Activated CD8-positive, alpha-beta T cell treated with anti-CD3 and anti-CD28 coated beads for 36 hours (primary cell): ENCODE measurements at regions of chr7 and their contacts with region 1.

Region 1: DNA sequence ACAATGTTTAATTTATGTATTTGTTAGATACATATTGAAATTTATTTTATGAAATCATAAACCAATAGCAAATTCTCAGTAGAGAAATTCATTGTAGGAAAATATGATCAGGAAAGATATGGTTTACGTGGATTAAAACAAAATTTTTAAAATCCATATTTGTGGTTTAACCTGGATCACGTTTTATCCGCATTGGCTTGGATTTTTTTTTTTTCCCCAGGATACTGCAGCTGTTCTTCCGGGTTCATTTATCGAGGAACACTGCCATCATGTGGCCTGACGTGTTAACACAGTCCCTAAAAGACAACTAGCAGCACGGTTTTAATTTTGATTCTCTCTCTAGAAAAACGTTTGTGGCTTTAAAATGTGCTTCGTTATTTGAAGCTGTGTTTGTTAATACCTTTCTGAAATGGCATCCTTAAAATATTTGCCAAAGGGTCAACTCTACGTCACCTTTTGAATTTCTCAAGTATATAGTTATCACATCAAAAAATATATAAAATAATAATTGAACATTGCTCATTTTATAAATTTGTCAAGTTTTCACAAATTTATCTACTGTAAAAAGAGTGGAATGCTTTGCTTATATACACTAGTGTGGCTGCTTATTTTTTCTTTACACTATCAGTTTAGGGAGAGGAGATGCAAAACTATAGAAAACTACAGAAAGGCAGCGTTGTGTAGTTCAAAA is 8.7 kb upstream of the ASB4 start:
- DNase-seq: peak; percentile 76
- ATAC-seq: peak; percentile 64
- H3K4me3 Mint-ChIP-seq: no peak overlapping the region
- H3K27ac Mint-ChIP-seq: no peak overlapping the region
- H3K4me1 Mint-ChIP-seq: no peaks in the 10 kb centered on the region
- H3K27me3 Mint-ChIP-seq: peaks cover 6% of the 10 kb centered on the region
- CTCF ChIP-seq: peak; percentile 94

Region 2: GRCh38 chr7:94449148-94449725 is 1027.8 kb before region 1 on chr7:
- CTCF ChIA-PET with region 1: interaction called, 34 read pairs
- POLR2A ChIA-PET with region 1: no interaction called
- intact Hi-C with region 1: loop called (anchors 10 kb)
- DNase-seq: no peak
- ATAC-seq: no peak
- H3K4me3 Mint-ChIP-seq: no peak overlapping the region
- H3K27ac Mint-ChIP-seq: no peak overlapping the region
- H3K4me1 Mint-ChIP-seq: no peaks in the 10 kb centered on the region
- H3K27me3 Mint-ChIP-seq: peaks cover 3% of the 10 kb centered on the region
- CTCF ChIP-seq: peak; percentile 51

Region 3: GRCh38 chr7:95190515-95190914 is 286.5 kb before region 1 on chr7:
- CTCF ChIA-PET with region 1: interaction called, 16 read pairs
- POLR2A ChIA-PET with region 1: no interaction called
- intact Hi-C with region 1: no loop called
- DNase-seq: peak; percentile 13
- ATAC-seq: no peak
- H3K4me3 Mint-ChIP-seq: no peak overlapping the region
- H3K27ac Mint-ChIP-seq: no peak overlapping the region
- H3K4me1 Mint-ChIP-seq: no peaks in the 10 kb centered on the region
- H3K27me3 Mint-ChIP-seq: no peaks in the 10 kb centered on the region
- CTCF ChIP-seq: no peak

Region 4: DNA sequence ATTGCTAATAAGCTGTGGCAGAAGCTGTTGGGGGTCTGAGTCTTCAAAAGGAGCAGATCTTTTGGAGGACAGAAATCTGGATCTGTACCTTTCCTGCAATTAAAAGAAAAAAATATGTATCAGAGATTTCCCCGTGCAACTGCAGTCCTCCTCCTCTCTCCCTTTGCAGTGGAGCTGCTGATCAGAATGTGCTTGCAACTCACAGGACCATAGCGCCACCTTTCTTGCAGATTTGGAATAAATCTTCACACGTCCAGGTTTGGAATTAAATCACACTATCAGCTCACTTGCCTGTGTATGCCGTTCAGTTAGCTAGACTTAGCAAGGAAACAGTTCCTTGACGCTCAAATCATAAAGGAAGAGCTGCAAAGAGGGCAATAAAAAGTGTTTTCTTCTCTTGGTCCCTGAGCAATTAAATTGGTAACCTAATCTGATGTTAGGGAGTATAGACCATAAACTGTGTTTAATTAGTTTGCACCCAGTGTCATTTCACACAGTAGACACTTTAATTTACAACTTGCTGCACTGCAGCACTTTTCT is 230.1 kb before region 1 on chr7:
- CTCF ChIA-PET with region 1: interaction called, 10 read pairs
- POLR2A ChIA-PET with region 1: no interaction called
- intact Hi-C with region 1: no loop called
- DNase-seq: peak; percentile 30
- ATAC-seq: no peak
- H3K4me3 Mint-ChIP-seq: no peak overlapping the region
- H3K27ac Mint-ChIP-seq: no peak overlapping the region
- H3K4me1 Mint-ChIP-seq: no peaks in the 10 kb centered on the region
- H3K27me3 Mint-ChIP-seq: peaks cover 5% of the 10 kb centered on the region
- CTCF ChIP-seq: peak; percentile 65

Region 5: GRCh38 chr7:95396136-95397032 is 80.7 kb before region 1 on chr7 and contains the start of gene PON3:
- CTCF ChIA-PET with region 1: interaction called, 36 read pairs
- POLR2A ChIA-PET with region 1: no interaction called
- intact Hi-C with region 1: no loop called
- DNase-seq: peak; percentile 42
- ATAC-seq: peak; percentile 92
- H3K4me3 Mint-ChIP-seq: peak within 1 kb of the TSS; percentile 62
- H3K27ac Mint-ChIP-seq: no peak within 1 kb of the TSS
- H3K4me1 Mint-ChIP-seq: peaks cover 3% of the 10 kb centered on the region
- H3K27me3 Mint-ChIP-seq: peaks cover 35% of the 10 kb centered on the region
- CTCF ChIP-seq: peak; percentile 34
- total RNA-seq, gene PON3: not detected

Region 6: GRCh38 chr7:95491634-95492320 is 14.7 kb after region 1 on chr7:
- CTCF ChIA-PET with region 1: interaction called, 28 read pairs
- POLR2A ChIA-PET with region 1: no interaction called
- intact Hi-C with region 1: no loop called
- DNase-seq: no peak
- ATAC-seq: no peak
- H3K4me3 Mint-ChIP-seq: no peak overlapping the region
- H3K27ac Mint-ChIP-seq: no peak overlapping the region
- H3K4me1 Mint-ChIP-seq: no peaks in the 10 kb centered on the region
- H3K27me3 Mint-ChIP-seq: no peaks in the 10 kb centered on the region
- CTCF ChIP-seq: no peak

Region 7: DNA sequence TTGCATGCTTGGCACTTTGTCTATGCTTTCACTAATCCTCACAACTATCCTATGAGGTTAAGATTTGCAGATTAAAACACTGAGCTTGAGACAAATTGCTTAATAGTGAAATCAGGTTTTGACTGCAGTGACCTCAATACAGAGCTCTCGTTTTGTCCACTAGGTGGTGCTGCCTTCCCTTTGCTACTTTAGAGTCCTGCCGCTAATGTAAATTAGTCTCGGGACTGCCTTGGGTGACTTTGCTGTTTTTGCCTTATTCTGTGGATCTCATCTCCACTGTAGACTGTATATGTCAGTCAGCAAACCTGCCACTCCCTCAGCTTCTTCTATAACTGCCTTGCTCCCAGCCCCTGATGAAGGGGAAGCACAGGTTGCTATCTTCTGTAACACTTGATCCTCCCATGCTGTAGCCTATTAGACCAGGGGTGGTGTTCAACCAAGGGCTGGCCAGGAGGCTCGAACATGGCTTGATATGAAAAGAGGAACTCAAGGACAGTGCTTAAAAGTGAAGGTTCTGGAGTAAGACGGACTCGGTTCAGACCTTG is 34.7 kb after region 1 on chr7:
- CTCF ChIA-PET with region 1: interaction called, 18 read pairs
- POLR2A ChIA-PET with region 1: no interaction called
- intact Hi-C with region 1: no loop called
- DNase-seq: peak; percentile 81
- ATAC-seq: peak; percentile 90
- H3K4me3 Mint-ChIP-seq: no peak overlapping the region
- H3K27ac Mint-ChIP-seq: no peak overlapping the region
- H3K4me1 Mint-ChIP-seq: no peaks in the 10 kb centered on the region
- H3K27me3 Mint-ChIP-seq: peaks cover 9% of the 10 kb centered on the region
- CTCF ChIP-seq: peak; percentile 80

Region 8: DNA sequence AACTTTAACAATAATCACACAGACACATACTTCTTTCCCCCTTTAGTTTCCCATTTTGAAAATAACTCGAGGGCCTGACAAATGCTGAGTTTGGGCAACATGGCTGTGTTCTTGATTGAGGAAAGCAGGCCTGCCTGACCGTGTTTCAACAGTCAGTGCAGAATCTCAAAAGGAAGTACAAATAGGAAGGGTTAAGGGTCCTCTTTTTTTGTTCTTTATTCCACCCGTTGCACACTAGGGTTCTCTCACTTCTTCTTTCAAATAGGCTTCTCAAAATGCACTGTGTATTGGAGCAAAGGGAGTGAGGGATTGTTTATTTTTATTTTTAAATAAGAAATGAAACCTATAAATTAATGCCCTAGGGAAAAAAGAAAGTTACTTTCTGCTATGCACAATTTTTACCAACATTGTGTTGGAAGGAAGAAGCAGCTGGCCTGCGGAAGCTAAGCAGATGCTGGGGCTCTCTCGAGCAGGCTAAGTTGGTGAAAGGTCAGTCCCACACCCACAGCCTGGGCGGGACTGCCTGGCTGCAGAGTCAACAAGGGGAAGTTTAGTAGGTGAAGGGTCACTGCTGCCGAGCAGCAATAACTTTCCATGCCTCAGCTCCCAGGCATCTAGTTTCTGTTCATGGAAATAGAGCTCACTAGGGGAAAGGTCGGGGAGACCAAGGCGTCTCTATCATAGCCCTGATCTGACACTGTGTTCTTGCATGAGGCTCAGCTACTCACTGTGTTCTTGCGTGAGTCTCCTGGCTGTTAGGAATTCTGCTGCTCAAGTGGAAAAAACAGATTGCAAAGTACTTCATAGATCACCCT is 131.5 kb after region 1 on chr7:
- CTCF ChIA-PET with region 1: no interaction called
- POLR2A ChIA-PET with region 1: no interaction called
- intact Hi-C with region 1: no loop called
- DNase-seq: peak; percentile 8
- ATAC-seq: no peak
- H3K4me3 Mint-ChIP-seq: no peak overlapping the region
- H3K27ac Mint-ChIP-seq: no peak overlapping the region
- H3K4me1 Mint-ChIP-seq: no peaks in the 10 kb centered on the region
- H3K27me3 Mint-ChIP-seq: peaks cover 10% of the 10 kb centered on the region
- CTCF ChIP-seq: no peak